PC-9 (cell line): ENCODE measurements at regions of chr11 and their contacts with region 1.

Region 1: DNA sequence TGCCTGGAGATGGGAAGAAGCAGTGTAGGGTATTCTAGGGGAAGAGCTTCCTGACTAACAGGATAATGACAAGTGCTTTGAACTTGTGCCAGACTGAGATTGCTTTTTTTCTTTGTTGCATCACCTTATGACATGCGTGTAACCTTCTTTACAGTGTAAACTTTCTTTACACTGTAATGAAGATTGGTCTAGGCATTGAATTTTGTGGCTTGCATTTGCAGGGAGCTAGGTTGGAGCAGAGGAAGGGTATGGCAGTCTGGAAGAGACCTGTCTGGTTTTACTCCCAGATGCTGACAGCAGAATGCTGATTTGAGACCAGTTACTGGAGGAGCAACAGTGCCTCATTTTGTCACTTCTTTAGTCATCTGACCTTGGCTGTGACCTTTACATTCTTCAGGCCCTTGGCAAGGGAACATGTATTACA is 5.6 kb downstream of the DDB2 start:
- DNase-seq: peak in 1 of 2 experiments; percentile 48
- H3K4me3 ChIP-seq: no peak overlapping the region
- H3K27ac ChIP-seq: peak overlapping the region; percentile 20; the same call in 1 of the 2 replicates
- H3K4me1 ChIP-seq: peaks cover 40% of the 10 kb centered on the region
- H3K27me3 ChIP-seq: no peaks in the 10 kb centered on the region
- CTCF ChIP-seq: no peak

Region 2: DNA sequence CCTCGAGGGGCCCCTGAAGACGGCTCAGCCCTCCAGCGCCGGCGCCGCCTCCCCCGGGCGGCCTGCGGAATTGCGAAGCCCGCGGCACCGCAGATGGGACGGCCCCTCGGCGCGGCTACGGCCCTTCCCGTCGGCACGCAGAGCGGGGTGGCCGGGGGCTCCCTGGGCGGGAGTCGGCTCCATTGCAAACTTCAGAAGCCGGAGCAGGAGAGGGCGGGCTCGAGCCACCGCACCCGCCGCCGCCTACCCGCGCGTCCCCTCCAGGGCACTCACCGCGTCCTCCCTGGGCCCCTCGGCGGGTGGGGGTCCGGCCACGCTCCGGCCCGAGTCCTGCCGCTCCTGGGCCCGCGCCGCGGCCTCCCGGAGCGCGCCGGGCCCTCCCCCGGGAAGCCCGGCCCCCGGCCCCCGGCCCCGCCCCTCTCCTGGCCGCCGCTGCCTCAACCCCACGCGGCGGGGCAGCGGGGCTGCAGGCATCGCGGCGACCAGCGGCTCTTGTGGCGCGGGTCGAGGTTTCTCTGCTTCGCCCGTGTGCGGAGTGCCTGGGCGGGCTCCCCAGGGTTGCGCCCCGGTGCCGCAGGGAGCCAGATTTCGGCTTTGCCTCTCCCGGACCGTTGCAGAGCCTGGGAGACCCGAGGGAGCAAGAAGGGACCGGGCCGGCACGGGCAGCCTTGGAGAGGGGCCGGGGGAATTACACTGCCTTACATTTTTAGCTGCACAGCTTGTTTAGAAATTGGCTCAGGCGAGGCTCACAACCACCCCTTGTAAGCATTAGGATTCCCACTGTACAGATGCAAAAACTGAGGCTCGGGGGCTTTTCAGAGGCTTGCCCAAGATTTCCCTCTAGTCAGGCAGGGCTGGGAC is 34.1 kb before region 1 on chr11 and contains the start of gene PACSIN3:
- CTCF ChIA-PET with region 1: interaction called, 7 read pairs
- POLR2A ChIA-PET with region 1: interaction called, 16 read pairs
- intact Hi-C with region 1: loop called (anchors 1 kb)
- DNase-seq: peak in 1 of 2 experiments; percentile 64
- H3K4me3 ChIP-seq: peak within 1 kb of the TSS; percentile 77
- H3K27ac ChIP-seq: peak within 1 kb of the TSS; percentile 84
- H3K4me1 ChIP-seq: peaks cover 56% of the 10 kb centered on the region
- H3K27me3 ChIP-seq: no peaks in the 10 kb centered on the region
- CTCF ChIP-seq: no peak
- total RNA-seq, gene PACSIN3: 113 and 114 TPM in 2 replicates